ENCODE measurements at regions of chr16 and their contacts with region 1.

Region 1: GRCh38 chr16:89363621-89364393 is 126.6 kb downstream of the ANKRD11 start:
- DNase-seq: peak; percentile 71
- H3K4me3 Mint-ChIP-seq: no peak overlapping the region
- H3K27ac Mint-ChIP-seq: peak overlapping the region; percentile 77
- H3K4me1 Mint-ChIP-seq: peaks cover 91% of the 10 kb centered on the region
- H3K27me3 Mint-ChIP-seq: no peaks in the 10 kb centered on the region

Region 2: GRCh38 chr16:89132291-89133005 is 231.4 kb before region 1 on chr16:
- CTCF ChIA-PET with region 1: no interaction called
- POLR2A ChIA-PET with region 1: no interaction called
- intact Hi-C with region 1: no loop called
- DNase-seq: no peak
- H3K4me3 Mint-ChIP-seq: no peak overlapping the region
- H3K27ac Mint-ChIP-seq: no peak overlapping the region
- H3K4me1 Mint-ChIP-seq: peaks cover 8% of the 10 kb centered on the region
- H3K27me3 Mint-ChIP-seq: no peaks in the 10 kb centered on the region

Region 3: GRCh38 chr16:89325861-89326471 is 37.8 kb before region 1 on chr16:
- CTCF ChIA-PET with region 1: interaction called, 3 read pairs
- POLR2A ChIA-PET with region 1: interaction called, 3 read pairs
- intact Hi-C with region 1: loop called (anchors 2 kb)
- DNase-seq: peak; percentile 48
- H3K4me3 Mint-ChIP-seq: no peak overlapping the region
- H3K27ac Mint-ChIP-seq: peak overlapping the region; percentile 46
- H3K4me1 Mint-ChIP-seq: peaks cover 87% of the 10 kb centered on the region
- H3K27me3 Mint-ChIP-seq: no peaks in the 10 kb centered on the region

Region 4: DNA sequence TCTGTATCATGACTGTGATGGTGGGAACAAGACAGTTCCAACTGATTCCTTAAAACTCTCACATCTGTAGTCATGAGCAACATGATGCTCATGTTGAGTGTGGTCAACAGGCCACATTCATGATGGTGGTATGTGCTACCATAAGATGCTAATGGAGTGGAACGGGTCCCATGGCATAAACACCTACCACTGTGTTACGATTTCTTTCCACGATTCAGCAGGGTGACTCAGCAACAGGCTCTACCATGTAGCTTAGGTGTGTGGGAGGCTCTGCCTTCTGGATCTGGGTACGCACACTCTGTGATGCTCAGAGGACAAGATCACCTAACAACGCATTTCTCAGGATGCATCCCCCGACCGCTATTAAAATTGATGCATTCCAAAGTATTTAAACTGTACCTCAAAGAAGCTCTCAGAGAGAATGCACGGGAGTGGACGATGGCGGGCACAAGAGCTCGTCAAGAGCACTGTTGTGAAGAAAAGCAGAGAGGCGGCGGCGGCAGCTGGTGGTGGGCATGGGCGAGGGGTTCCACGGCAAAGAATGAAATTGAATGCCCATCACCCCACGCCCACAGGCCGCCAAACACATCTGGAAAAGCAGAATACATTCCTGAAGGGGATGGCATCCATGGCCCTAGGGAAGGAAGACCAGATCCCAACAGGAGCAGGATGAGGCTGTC is 13.0 kb before region 1 on chr16:
- CTCF ChIA-PET with region 1: interaction called, 9 read pairs
- POLR2A ChIA-PET with region 1: interaction called, 20 read pairs
- intact Hi-C with region 1: loop called (anchors 1 kb)
- DNase-seq: peak; percentile 73
- H3K4me3 Mint-ChIP-seq: peak overlapping the region; percentile 2
- H3K27ac Mint-ChIP-seq: peak overlapping the region; percentile 79
- H3K4me1 Mint-ChIP-seq: peaks cover 87% of the 10 kb centered on the region
- H3K27me3 Mint-ChIP-seq: no peaks in the 10 kb centered on the region

Region 5: DNA sequence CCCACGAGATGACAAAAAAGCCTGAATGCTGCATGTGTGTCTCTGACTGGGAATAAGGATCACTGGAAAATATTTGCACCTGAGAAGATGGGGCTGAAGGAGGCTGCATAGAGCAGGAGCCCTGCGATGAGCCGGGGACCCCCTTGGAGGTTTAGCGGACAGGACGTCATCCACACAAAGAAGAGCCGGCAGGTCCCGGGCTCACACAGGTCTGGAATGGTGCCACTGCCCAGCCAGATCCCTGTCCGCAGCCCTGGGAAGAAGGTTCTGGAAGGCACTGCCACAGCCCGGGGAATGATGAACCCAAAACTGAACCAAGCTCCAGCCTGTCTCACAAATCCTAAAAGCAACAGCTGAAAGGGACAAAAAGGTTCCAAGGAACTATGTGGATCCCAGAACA is 24.7 kb after region 1 on chr16:
- CTCF ChIA-PET with region 1: no interaction called
- POLR2A ChIA-PET with region 1: interaction called, 4 read pairs
- intact Hi-C with region 1: loop called (anchors 1 kb)
- DNase-seq: no peak
- H3K4me3 Mint-ChIP-seq: no peak overlapping the region
- H3K27ac Mint-ChIP-seq: peak overlapping the region; percentile 38
- H3K4me1 Mint-ChIP-seq: peaks cover 75% of the 10 kb centered on the region
- H3K27me3 Mint-ChIP-seq: no peaks in the 10 kb centered on the region

Region 6: GRCh38 chr16:89484923-89485679 is 121.3 kb after region 1 on chr16:
- CTCF ChIA-PET with region 1: no interaction called
- POLR2A ChIA-PET with region 1: interaction called, 4 read pairs
- intact Hi-C with region 1: loop called (anchors 1 kb)
- DNase-seq: peak; percentile 68
- H3K4me3 Mint-ChIP-seq: peak overlapping the region; percentile 56
- H3K27ac Mint-ChIP-seq: peak overlapping the region; percentile 88
- H3K4me1 Mint-ChIP-seq: peaks cover 82% of the 10 kb centered on the region
- H3K27me3 Mint-ChIP-seq: no peaks in the 10 kb centered on the region